Activated CD8-positive, alpha-beta T cell treated with anti-CD3 and anti-CD28 coated beads, Interleukin-2, amount 10 ng/mL, durations not matched to agents 7 days and 5 days (primary cell): ENCODE measurements at regions of chr4 and their contacts with region 1.

Region 1: DNA sequence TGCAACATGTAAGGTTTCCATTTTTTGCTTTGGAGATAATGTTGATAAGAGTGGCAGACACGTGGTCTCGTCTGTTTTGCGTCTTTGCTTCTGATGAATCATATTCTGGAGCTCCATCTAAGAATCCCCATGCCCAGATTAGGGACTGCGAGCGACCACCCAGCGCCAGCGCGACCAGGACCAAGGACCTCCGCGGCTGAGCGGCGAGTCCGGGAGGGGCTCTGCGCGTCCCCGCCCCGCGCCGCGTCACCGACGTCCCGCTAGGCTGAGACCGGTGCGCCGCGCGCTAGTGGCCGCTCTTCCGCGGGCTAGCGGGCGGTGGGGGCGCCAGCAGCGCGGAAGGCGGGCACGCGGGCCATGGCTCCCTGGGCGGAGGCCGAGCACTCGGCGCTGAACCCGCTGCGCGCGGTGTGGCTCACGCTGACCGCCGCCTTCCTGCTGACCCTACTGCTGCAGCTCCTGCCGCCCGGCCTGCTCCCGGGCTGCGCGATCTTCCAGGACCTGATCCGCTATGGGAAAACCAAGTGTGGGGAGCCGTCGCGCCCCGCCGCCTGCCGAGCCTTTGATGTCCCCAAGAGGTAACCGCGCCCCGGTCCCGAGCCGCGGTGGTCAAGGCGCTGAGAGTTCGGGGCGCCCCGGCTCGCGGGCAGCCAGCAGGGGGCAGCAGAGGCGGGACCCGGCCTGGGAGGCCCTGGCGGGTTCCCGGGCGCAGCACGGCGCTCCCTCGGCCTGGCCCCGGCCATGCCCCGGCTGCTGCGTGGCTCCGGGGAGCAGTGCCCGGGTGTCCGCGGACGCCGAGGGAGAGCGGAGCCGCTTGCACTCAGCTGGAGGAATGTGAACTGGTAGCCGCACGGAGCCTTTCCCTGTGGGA is at the start of gene SRD5A3:
- DNase-seq: peak; percentile 82
- ATAC-seq: peak; percentile 95
- H3K4me3 Mint-ChIP-seq: peak within 1 kb of the TSS; percentile 84
- H3K27ac Mint-ChIP-seq: peak within 1 kb of the TSS; percentile 88
- H3K4me1 Mint-ChIP-seq: peaks cover 17% of the 10 kb centered on the region
- H3K27me3 Mint-ChIP-seq: no peaks in the 10 kb centered on the region
- total RNA-seq, gene SRD5A3: 6.5 to 8.6 TPM

Region 2: DNA sequence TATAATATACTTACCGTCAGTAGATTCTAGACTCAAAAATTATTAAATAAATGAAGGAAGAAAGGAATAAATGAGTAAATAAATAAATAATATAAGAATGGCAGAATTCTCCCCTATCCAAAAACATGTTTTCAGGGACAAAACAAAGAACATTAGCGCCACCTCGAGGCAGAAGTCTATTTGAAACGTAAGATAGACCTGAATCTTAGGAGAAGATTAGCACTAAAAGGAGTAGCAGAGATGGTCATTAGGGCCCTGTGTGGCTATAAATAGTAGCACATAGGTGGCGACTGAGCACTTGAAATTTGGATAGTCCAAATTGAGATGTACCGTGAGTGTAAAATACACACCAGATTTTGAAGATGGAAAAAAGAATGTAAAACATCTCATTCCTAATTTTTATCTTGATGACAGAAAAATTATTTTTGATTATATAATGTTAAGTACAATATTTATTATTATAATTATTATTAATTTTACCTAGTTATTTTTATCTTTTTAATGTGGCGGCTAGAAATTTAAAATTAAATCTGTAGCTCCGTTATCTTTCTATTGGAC is 24.4 kb before region 1 on chr4:
- CTCF ChIA-PET with region 1: interaction called, 10 read pairs
- POLR2A ChIA-PET with region 1: no interaction called
- DNase-seq: peak; percentile 75
- ATAC-seq: peak; percentile 39
- H3K4me3 Mint-ChIP-seq: no peak overlapping the region
- H3K27ac Mint-ChIP-seq: no peak overlapping the region
- H3K4me1 Mint-ChIP-seq: peaks cover 10% of the 10 kb centered on the region
- H3K27me3 Mint-ChIP-seq: no peaks in the 10 kb centered on the region

Region 3: DNA sequence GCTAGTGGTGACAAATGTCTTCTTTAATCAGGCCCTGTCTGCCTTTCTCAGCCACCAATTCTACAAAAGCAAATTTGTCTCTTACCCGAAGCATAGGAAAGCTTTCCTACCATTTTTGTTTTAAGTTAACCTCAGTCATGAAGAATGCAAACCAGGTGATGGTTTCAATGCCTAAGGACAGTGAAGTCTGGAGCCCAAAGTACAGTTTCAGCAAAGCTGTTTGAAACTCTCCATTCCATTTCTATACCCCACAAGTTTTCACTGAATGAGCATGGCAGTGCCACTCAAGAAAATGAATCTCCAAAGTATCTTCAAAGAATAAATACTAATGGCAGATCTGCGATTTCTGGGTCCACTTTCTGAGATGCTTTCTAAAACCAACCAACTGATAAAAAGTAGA is 23.8 kb after region 1 on chr4:
- CTCF ChIA-PET with region 1: interaction called, 10 read pairs
- POLR2A ChIA-PET with region 1: no interaction called
- DNase-seq: no peak
- ATAC-seq: no peak
- H3K4me3 Mint-ChIP-seq: no peak overlapping the region
- H3K27ac Mint-ChIP-seq: no peak overlapping the region
- H3K4me1 Mint-ChIP-seq: no peaks in the 10 kb centered on the region
- H3K27me3 Mint-ChIP-seq: no peaks in the 10 kb centered on the region

Region 4: GRCh38 chr4:55435141-55435841 is 89.1 kb after region 1 on chr4:
- CTCF ChIA-PET with region 1: interaction called, 15 read pairs
- POLR2A ChIA-PET with region 1: no interaction called
- DNase-seq: peak; percentile 53
- ATAC-seq: peak; percentile 84
- H3K4me3 Mint-ChIP-seq: no peak overlapping the region
- H3K27ac Mint-ChIP-seq: peak overlapping the region; percentile 66
- H3K4me1 Mint-ChIP-seq: peaks cover 16% of the 10 kb centered on the region
- H3K27me3 Mint-ChIP-seq: no peaks in the 10 kb centered on the region

Region 5: GRCh38 chr4:55475394-55476243 is 129.4 kb after region 1 on chr4:
- CTCF ChIA-PET with region 1: no interaction called
- POLR2A ChIA-PET with region 1: no interaction called
- DNase-seq: peak; percentile 41
- ATAC-seq: peak; percentile 58
- H3K4me3 Mint-ChIP-seq: no peak overlapping the region
- H3K27ac Mint-ChIP-seq: no peak overlapping the region
- H3K4me1 Mint-ChIP-seq: peaks cover 20% of the 10 kb centered on the region
- H3K27me3 Mint-ChIP-seq: no peaks in the 10 kb centered on the region